ENCODE measurements at regions of chr11 and their contacts with region 1.

Region 1: GRCh38 chr11:120801801-120802689 is 221.9 kb upstream of the TBCEL start:
- DNase-seq: peak; percentile 25 to 91
- H3K4me3 ChIP-seq: no peak overlapping the region
- H3K27ac ChIP-seq: no peak overlapping the region
- H3K4me1 ChIP-seq: peaks cover 0 to 3% (median 1%) of the 10 kb centered on the region in 4 experiments; a peak in 4 of 7 replicates
- H3K27me3 ChIP-seq: no peaks in the 10 kb centered on the region
- CTCF ChIP-seq: peak; percentile 85 to 95 (median 86)
- EP300 ChIP-seq: no peak
- POLR2A ChIP-seq: no peak
- RAD21 ChIP-seq: peak; percentile 80 to 90

Region 2: DNA sequence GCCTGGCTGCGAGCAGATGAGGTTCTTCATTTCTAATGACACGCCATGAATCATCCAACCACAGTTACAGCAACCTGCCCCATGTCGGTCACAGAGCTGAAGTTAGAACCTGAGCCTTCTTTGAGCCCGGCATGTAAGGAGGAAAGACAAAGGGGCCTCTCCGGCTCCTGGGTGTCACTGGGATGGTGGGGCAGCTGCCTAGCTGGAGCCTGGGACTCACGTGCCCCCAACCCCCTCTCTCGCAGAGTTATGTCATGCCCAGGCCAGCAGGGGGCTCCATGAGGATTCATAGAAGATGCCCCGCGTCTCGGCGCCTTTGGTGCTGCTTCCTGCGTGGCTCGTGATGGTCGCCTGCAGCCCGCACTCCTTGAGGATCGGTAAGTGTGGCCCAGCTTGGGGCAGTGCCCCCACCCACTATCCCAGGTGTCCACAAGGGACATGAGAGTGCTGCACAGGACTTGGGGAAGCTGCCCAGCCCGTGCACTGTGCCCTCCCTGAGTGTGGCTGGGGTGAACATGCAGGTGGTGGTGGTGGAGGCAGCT is 141.9 kb before region 1 on chr11:
- CTCF ChIA-PET with region 1: interaction called, 27 read pairs
- POLR2A ChIA-PET with region 1: no interaction called
- DNase-seq: peak in 1 of 2 experiments; percentile 87
- H3K4me3 ChIP-seq: no peak overlapping the region
- H3K27ac ChIP-seq: no peak overlapping the region
- H3K4me1 ChIP-seq: peaks cover 3 to 6% (median 4%) of the 10 kb centered on the region in 4 experiments; a peak in 5 of 7 replicates
- H3K27me3 ChIP-seq: no peaks in the 10 kb centered on the region; a peak in 2 of 7 replicates
- CTCF ChIP-seq: peak; percentile 79 to 83 (median 81)
- EP300 ChIP-seq: no peak
- POLR2A ChIP-seq: no peak
- RAD21 ChIP-seq: peak; percentile 65 to 76

Region 3: GRCh38 chr11:120696597-120697218 is 105.3 kb before region 1 on chr11:
- CTCF ChIA-PET with region 1: interaction called, 24 read pairs
- POLR2A ChIA-PET with region 1: no interaction called
- DNase-seq: peak in 1 of 2 experiments; percentile 83
- H3K4me3 ChIP-seq: no peak overlapping the region
- H3K27ac ChIP-seq: no peak overlapping the region
- H3K4me1 ChIP-seq: peaks cover 0 to 7% (median 2%) of the 10 kb centered on the region in 4 experiments; a peak in 2 of 7 replicates
- H3K27me3 ChIP-seq: no peaks in the 10 kb centered on the region
- CTCF ChIP-seq: peak; percentile 60 to 77 (median 74)
- EP300 ChIP-seq: no peak
- POLR2A ChIP-seq: no peak
- RAD21 ChIP-seq: peak; percentile 24 to 45; a peak in 3 of 4 replicates

Region 4: DNA sequence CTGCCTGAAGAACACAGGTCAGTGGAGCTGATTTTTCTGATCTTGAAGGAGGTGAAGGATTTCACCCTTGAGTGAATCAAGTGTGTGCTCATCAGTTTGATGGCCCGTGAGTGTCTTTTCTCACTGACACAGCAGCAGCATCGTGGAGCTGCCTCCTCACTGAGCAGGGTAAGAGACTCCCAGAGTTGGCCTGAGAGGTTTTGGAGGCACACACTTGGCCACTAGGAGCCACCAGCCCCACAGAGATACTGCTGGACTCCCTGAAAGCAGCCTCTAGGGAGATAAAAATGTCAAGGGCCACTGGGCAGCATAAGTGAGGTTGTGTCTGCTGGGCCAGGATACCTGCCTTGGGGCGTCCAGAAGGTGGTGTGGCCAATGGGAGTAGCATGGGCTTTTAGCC is 45.1 kb before region 1 on chr11:
- CTCF ChIA-PET with region 1: interaction called, 21 read pairs
- POLR2A ChIA-PET with region 1: no interaction called
- DNase-seq: no peak
- H3K4me3 ChIP-seq: no peak overlapping the region
- H3K27ac ChIP-seq: no peak overlapping the region
- H3K4me1 ChIP-seq: peaks cover 0 to 5% (median 3%) of the 10 kb centered on the region in 4 experiments; a peak in 3 of 7 replicates
- H3K27me3 ChIP-seq: peaks cover 0 to under 1% (median 0%) of the 10 kb centered on the region in 4 experiments; a peak in 1 of 7 replicates
- CTCF ChIP-seq: peak; percentile 41 to 70 (median 52)
- EP300 ChIP-seq: no peak
- POLR2A ChIP-seq: no peak
- RAD21 ChIP-seq: peak; percentile 58 to 77

Region 5: DNA sequence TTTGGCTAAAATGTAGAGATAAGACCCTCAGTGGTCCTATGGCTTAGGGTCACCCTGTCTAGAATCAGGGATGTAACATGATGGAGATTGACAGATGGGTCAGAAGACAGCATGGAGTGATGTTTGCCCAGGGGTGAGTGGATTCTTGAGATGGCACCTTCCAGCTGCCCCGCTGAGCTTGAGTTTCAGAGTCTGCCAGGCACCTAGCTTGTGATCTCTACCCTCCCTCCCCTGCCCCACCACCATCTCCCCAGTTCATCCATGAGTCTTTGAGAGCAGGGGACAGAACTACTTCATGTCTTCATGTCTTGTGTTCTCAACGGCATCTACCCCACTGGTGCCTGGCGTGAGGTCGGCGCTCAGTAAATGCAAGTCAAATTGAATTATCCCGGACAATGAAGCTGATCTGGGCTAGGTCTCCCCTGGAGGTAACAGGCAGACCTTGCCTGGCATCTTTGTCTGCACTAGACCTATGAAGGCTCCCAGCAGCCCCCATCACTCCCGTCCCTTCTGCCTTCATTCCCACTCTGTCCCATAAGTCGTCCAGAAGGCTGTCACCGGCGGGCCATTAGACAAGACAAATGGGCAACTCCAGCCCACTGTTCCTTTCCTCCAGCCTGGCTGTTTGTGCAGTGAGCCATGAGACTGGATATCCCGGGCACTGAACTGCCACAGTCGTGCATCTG is 17.3 kb before region 1 on chr11:
- CTCF ChIA-PET with region 1: interaction called, 26 read pairs
- POLR2A ChIA-PET with region 1: no interaction called
- DNase-seq: no peak
- H3K4me3 ChIP-seq: no peak overlapping the region
- H3K27ac ChIP-seq: no peak overlapping the region
- H3K4me1 ChIP-seq: peaks cover 0 to 8% (median 3%) of the 10 kb centered on the region in 4 experiments; a peak in 3 of 7 replicates
- H3K27me3 ChIP-seq: no peaks in the 10 kb centered on the region
- CTCF ChIP-seq: no peak
- EP300 ChIP-seq: no peak
- POLR2A ChIP-seq: no peak
- RAD21 ChIP-seq: no peak

Region 6: GRCh38 chr11:120832481-120833238 is 30.6 kb after region 1 on chr11:
- CTCF ChIA-PET with region 1: interaction called, 15 read pairs
- POLR2A ChIA-PET with region 1: no interaction called
- DNase-seq: no peak
- H3K4me3 ChIP-seq: no peak overlapping the region
- H3K27ac ChIP-seq: no peak overlapping the region
- H3K4me1 ChIP-seq: no peaks in the 10 kb centered on the region
- H3K27me3 ChIP-seq: no peaks in the 10 kb centered on the region
- CTCF ChIP-seq: no peak
- EP300 ChIP-seq: no peak
- POLR2A ChIP-seq: no peak
- RAD21 ChIP-seq: no peak

Region 7: DNA sequence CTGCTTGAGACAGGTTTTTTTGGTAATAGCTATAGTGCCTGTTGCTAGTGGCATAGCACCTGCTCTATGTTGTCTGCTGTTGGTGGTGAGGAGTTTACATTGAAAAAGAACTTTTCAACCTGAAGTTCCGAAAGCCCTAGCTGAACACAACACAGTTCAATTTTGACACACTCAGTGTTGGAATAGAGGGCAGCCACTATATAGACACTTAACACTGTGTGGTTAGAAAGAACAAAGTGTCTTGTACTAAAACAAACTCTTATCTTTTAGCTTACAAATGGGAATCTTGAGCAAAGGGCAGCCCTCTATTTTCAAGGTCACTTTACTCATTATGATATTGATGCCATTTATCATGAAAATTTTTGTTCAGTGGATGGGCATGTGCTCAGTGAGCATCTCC is 240.3 kb after region 1 on chr11:
- CTCF ChIA-PET with region 1: no interaction called
- POLR2A ChIA-PET with region 1: no interaction called
- DNase-seq: no peak
- H3K4me3 ChIP-seq: no peak overlapping the region
- H3K27ac ChIP-seq: no peak overlapping the region
- H3K4me1 ChIP-seq: peaks cover 0 to 12% (median 6%) of the 10 kb centered on the region in 4 experiments; a peak in 6 of 7 replicates
- H3K27me3 ChIP-seq: no peaks in the 10 kb centered on the region
- CTCF ChIP-seq: no peak
- EP300 ChIP-seq: no peak
- POLR2A ChIP-seq: no peak
- RAD21 ChIP-seq: no peak